A673 (cell line): ENCODE measurements at regions of chr11 and their contacts with region 1.

Region 1: DNA sequence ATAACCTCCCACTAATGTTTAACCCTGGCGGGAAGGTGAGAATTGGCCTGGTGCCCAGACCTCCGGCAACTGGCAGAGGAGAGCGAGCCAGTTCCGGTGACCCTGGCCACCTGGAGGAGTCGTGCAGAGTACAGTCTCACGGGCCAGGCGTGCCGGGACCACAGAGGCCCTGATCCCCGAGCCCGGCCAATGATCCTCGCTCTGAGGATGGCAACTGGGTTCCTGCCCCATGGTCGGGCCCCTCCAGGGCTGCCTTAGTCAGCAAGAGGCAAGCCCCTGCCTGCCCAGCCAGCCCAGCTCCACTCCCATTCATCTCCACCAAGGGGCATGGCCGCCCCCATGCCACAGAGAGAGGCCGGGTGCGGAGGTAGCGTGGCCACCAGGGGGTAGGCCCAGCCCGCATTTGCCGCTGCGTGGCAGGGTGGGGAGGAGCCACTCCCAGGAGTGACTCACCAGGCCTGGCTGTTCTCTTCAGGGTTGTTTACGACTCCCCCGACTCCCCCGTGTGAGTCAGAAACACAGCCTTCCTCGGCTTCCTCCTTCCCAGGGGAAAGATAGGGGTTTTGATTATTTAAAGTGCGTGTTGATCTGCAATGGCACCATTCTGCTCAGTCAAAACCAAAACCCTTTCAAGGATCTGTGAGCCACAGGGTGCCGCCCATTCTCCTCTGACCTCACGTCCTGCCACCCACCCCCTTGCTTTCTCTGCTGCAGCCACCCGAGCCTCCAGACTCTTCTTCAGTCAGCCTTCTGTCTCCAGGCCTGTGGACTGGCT is at the start of gene SLC25A45:
- DNase-seq: peak; percentile 99
- H3K4me3 ChIP-seq: peak within 1 kb of the TSS; percentile 40
- H3K27ac ChIP-seq: peak within 1 kb of the TSS; percentile 94
- H3K4me1 ChIP-seq: peaks cover 40% of the 10 kb centered on the region
- H3K27me3 ChIP-seq: no peaks in the 10 kb centered on the region
- CTCF ChIP-seq: peak; percentile 82
- total RNA-seq, gene SLC25A45: 5.3 and 7.4 TPM in 2 replicates

Region 2: DNA sequence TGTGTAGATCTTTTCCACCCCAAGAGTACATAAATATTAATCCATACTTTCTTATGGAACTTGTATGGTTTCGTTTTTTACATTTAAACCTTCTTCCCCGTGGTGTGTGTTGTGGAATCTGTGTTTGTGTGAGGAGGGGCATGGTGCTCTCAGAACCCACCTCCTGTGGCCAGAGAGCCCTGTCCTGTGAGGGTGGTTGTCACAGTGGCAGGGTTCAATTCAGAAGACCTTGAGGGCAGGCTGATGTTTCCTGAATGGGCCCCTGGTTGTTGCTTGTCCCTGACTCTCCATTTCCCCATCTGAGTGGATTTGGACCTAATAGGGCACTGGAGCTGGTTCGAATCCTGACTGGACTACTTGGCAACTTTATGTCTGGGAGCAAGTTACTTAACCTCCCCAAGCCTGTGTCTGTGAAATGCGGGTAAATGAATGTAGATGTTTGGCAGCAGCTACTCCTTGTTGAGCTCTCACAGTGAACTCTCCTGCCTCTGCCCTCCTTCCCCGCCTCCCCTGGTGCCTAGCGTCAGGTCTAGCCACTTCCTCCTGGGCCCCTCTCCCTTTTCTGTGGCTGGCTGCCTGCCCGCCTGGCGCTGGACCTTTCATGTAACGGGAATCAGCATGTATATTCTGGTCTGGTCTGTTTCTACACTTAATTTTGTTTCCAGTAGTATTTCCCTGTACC is 47.6 kb after region 1 on chr11:
- CTCF ChIA-PET with region 1: no interaction called
- POLR2A ChIA-PET with region 1: interaction called, 3 read pairs
- intact Hi-C with region 1: loop called (anchors 5 kb)
- DNase-seq: no peak
- H3K4me3 ChIP-seq: peak overlapping the region; percentile 66
- H3K27ac ChIP-seq: peak overlapping the region; percentile 100
- H3K4me1 ChIP-seq: peaks cover 60% of the 10 kb centered on the region
- H3K27me3 ChIP-seq: no peaks in the 10 kb centered on the region
- CTCF ChIP-seq: no peak

Region 3: DNA sequence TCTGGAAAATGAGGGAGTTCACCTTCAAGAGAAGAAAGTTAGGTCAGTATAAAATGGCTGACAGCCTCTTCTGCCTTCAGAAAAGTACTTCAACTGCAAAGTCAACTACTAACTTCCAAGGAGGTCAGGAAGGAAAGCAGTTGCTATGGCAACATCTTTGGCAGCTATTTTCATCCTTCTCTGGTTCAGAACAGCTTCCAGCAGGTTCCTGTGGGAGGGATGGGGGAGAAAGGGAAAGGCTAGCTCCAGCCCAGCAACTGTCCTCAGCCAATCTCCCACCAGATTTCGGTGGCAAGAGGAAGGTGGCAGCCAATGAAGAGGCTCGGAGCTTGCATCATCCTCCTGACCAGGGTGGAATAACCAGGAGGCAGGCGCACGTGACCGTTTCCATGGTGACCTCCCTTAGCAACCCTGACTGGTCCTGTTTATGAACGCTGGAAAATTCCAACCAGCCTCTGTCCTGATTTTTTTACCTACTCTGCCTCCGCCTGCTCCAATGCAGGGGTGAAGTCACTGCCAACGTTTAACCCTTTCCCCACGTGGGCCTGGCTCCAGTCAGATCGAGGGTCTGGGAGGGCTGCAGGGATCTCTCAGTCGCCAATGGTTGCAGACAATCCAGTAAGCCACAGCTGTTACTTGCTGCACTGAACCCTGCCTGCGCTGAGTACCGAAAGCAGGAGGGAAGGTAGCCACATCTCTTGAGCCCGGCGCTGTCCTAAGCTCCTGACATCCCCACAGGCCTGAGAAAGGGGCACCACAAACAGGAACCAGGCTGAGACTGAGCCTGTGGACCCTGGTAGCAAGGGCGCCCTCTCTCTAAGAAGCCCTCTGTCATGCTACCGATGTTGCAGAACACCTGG is 105.4 kb after region 1 on chr11:
- CTCF ChIA-PET with region 1: no interaction called
- POLR2A ChIA-PET with region 1: interaction called, 10 read pairs
- intact Hi-C with region 1: no loop called
- DNase-seq: peak; percentile 100
- H3K4me3 ChIP-seq: no peak overlapping the region
- H3K27ac ChIP-seq: peak overlapping the region; percentile 90
- H3K4me1 ChIP-seq: peaks cover 65% of the 10 kb centered on the region
- H3K27me3 ChIP-seq: no peaks in the 10 kb centered on the region
- CTCF ChIP-seq: no peak